AG04450 (cell line): ENCODE measurements at regions of chr11 and their contacts with region 1.

Region 1: GRCh38 chr11:69497221-69497787 is 15.8 kb downstream of the LINC01488 start:
- DNase-seq: peak; percentile 90
- H3K4me3 ChIP-seq: peak overlapping the region; percentile 17; the same call in 1 of the 2 replicates
- H3K27ac ChIP-seq: peak overlapping the region; percentile 87
- H3K27me3 ChIP-seq: no peaks in the 10 kb centered on the region
- CTCF ChIP-seq: no peak

Region 2: GRCh38 chr11:69443138-69443967 is 54.0 kb before region 1 on chr11:
- CTCF ChIA-PET with region 1: no interaction called
- POLR2A ChIA-PET with region 1: interaction called, 15 read pairs
- DNase-seq: peak; percentile 79
- H3K4me3 ChIP-seq: peak overlapping the region; percentile 56
- H3K27ac ChIP-seq: peak overlapping the region; percentile 94
- H3K27me3 ChIP-seq: no peaks in the 10 kb centered on the region
- CTCF ChIP-seq: no peak

Region 3: GRCh38 chr11:70281156-70281609 is 783.9 kb after region 1 on chr11:
- CTCF ChIA-PET with region 1: no interaction called
- POLR2A ChIA-PET with region 1: no interaction called
- DNase-seq: no peak
- H3K4me3 ChIP-seq: no peak overlapping the region
- H3K27ac ChIP-seq: peak overlapping the region; percentile 31
- H3K27me3 ChIP-seq: no peaks in the 10 kb centered on the region
- CTCF ChIP-seq: 0 out of 2 replicates have a peak, but pooled peaks have one; percentile 3